RWPE1 (cell line): ENCODE measurements at regions of chr11 and their contacts with region 1.

Region 1: DNA sequence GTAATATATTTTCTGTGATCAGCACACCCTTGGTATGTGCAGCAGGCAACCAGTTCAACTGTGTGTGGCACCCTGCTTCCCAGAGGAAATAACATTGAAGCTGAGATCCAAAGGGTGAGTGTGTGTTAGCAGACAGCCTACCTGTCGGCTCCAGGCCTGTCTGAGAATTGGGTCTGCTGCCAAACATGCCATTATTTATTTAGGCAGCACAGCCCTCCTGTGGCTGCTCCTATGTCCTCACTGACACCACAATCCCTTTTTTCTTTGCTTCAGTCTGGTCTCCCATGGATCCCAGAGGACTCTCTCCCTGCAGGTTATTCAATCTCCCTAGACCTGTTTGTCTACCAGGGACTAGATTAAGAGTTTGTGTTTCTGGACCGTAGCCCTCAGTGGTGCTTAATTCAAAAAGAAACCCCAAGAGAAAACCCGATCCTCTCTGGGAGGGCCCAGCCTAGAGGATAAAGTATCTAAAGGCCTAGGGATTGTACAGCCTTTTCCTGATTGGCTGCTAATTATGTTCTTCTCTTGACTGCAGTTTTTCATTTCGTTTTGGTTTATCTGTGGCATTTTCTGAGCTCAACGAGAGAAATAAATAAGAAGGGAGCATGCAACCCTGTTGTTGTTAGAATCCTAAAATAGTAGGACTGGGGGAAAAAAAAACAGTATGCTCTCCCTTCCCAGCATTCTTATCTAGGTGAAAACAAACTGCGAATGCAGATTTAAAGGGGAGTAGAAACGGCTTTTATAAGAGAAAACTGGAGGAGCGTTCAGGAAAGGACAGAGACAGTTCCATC is 24.1 kb downstream of the KCNE3 start:
- DNase-seq: peak; percentile 66
- H3K27ac ChIP-seq: no peak overlapping the region
- CTCF ChIP-seq: peak; percentile 18; the same call in 1 of the 2 replicates

Region 2: GRCh38 chr11:74255741-74256369 is 187.4 kb before region 1 on chr11:
- CTCF ChIA-PET with region 1: interaction called, 12 read pairs
- POLR2A ChIA-PET with region 1: no interaction called
- DNase-seq: peak; percentile 79
- H3K27ac ChIP-seq: no peak overlapping the region
- CTCF ChIP-seq: peak; percentile 91

Region 3: GRCh38 chr11:74672956-74673692 is 229.9 kb after region 1 on chr11:
- CTCF ChIA-PET with region 1: no interaction called
- POLR2A ChIA-PET with region 1: no interaction called
- DNase-seq: peak; percentile 63
- H3K27ac ChIP-seq: peak overlapping the region; percentile 76
- CTCF ChIP-seq: no peak